Right cardiac atrium (tissue), 5 donors: ENCODE measurements at regions of chr2 and their contacts with region 1.

Region 1: DNA sequence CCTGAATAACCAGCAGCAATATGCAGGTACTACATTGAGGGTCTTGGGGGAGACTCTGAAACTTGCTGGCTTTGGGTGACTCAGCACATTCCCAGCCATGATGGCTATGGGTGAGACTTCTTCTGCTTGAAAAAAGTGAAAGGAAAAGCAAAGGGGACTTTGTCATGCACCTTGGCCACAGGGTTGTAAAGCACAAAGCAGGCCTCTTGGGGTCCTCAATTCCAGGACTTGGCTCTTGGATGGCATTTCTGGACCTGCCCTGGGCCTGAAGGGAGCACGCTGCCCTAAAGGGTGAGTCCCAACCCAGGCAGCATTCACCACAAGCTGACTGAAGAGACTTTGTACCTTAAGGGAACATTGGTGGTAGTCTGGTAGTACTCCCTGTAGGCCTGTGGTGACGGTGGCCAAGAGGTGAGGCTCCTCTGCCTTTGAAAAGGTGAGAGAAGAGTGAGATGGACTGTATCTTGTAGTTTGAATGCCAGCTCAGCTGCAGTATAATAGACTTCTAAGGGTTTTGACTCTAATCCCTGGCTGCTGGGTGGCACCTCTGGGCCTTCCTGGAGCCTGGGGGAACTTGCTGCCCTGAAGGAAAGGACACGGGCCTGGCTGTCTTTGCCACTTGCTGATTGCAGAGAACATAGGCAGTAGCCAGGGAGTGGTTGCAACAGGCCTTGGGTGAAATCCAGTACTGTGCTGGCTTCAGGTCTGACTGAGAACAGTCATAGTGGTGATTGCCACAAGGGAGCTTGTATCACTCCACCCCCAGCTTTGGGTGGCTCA is 36.5 kb upstream of the CYTIP start:
- DNase-seq: peak; percentile 87 to 93 (median 88)
- ATAC-seq: peak; percentile 98
- H3K4me3 ChIP-seq: no peak overlapping the region
- H3K27ac ChIP-seq: peak overlapping the region; percentile 87
- H3K4me1 ChIP-seq: peaks cover 10% of the 10 kb centered on the region
- H3K27me3 ChIP-seq: no peaks in the 10 kb centered on the region

Region 2: GRCh38 chr2:157336137-157337010 is 144.0 kb before region 1 on chr2:
- intact Hi-C with region 1: loop called in 1 of 4 experiments (anchors 10 kb)
- DNase-seq: no peak
- ATAC-seq: peak in 1 of 2 donors; percentile 64
- H3K4me3 ChIP-seq: no peak overlapping the region
- H3K27ac ChIP-seq: no peak overlapping the region
- H3K4me1 ChIP-seq: no peaks in the 10 kb centered on the region
- H3K27me3 ChIP-seq: no peaks in the 10 kb centered on the region